ENCODE measurements at regions of chr19 and their contacts with region 1.

Region 1: GRCh38 chr19:50804420-50805272 is 14.4 kb downstream of the ACP4 start:
- DNase-seq: peak; percentile 99
- H3K4me3 ChIP-seq: peak overlapping the region; percentile 99
- H3K27ac ChIP-seq: peak overlapping the region; percentile 73
- H3K4me1 ChIP-seq: peaks cover 22% of the 10 kb centered on the region
- CTCF ChIP-seq: no peak

Region 2: DNA sequence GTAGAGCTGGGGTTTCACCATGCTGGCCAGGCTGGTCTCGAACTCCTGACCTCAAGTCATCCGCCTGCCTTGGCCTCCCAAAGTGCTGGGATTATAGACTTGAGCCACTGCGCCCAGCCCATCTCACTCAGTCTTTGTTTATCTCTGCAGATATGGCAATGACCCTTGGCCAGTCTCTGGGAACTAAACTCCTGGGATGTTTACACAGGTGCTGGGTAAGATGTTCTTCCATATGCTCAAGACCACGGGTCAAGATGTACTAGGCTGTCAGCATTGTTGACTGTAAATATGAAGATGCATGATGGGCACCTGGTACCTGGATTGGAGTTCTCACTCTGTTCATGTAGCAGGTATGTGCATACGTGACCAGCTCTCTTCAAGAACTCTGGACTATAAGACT is 743.0 kb before region 1 on chr19:
- CTCF ChIA-PET with region 1: no interaction called
- POLR2A ChIA-PET with region 1: no interaction called
- intact Hi-C with region 1: no loop called
- DNase-seq: no peak
- H3K4me3 ChIP-seq: no peak overlapping the region
- H3K27ac ChIP-seq: no peak overlapping the region
- H3K4me1 ChIP-seq: no peaks in the 10 kb centered on the region
- CTCF ChIP-seq: no peak

Region 3: GRCh38 chr19:50341091-50341564 is 463.5 kb before region 1 on chr19:
- CTCF ChIA-PET with region 1: no interaction called
- POLR2A ChIA-PET with region 1: no interaction called
- intact Hi-C with region 1: loop called (anchors 10 kb)
- DNase-seq: peak; percentile 76
- H3K4me3 ChIP-seq: peak overlapping the region; percentile 74
- H3K27ac ChIP-seq: peak overlapping the region; percentile 98
- H3K4me1 ChIP-seq: peaks cover 75% of the 10 kb centered on the region
- CTCF ChIP-seq: no peak

Region 4: DNA sequence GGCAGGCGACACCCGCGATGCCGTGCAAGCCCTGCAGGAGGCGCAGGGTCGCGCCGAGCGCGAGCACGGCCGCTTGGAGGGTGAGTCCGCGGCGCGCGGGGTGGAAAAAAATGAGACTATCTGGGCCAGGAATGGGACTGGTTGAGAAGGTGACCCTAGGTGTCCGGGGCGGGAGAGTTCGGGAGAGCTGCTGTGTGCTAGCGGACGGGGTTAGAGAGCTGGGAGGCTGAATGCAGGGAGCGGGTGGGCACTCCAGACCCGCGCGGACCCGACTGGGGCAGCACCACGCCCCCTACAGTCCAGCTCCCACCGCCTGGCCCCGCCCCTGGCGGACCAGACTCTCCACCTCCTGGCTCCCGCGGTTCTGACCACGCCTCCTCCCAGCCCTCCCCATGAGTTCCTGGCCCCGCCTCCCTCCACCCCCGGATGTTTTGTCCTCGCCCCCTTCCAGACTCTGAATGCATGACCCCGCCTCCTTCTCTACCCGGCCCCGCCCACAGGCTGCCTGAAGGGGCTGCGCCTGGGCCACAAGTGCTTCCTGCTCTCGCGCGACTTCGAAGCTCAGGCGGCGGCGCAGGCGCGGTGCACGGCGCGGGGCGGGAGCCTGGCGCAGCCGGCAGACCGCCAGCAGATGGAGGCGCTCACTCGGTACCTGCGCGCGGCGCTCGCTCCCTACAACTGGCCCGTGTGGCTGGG is 80.0 kb before region 1 on chr19:
- CTCF ChIA-PET with region 1: no interaction called
- POLR2A ChIA-PET with region 1: interaction called, 10 read pairs
- intact Hi-C with region 1: no loop called
- DNase-seq: peak; percentile 96
- H3K4me3 ChIP-seq: peak overlapping the region; percentile 76
- H3K27ac ChIP-seq: no peak overlapping the region
- H3K4me1 ChIP-seq: peaks cover 23% of the 10 kb centered on the region
- CTCF ChIP-seq: peak; percentile 76

Region 5: GRCh38 chr19:50817941-50818858 is 13.6 kb after region 1 on chr19:
- CTCF ChIA-PET with region 1: no interaction called
- POLR2A ChIA-PET with region 1: interaction called, 3 read pairs
- intact Hi-C with region 1: loop called (anchors 2 kb)
- DNase-seq: peak; percentile 71
- H3K4me3 ChIP-seq: peak overlapping the region; percentile 71
- H3K27ac ChIP-seq: no peak overlapping the region
- H3K4me1 ChIP-seq: peaks cover 30% of the 10 kb centered on the region
- CTCF ChIP-seq: no peak

Region 6: DNA sequence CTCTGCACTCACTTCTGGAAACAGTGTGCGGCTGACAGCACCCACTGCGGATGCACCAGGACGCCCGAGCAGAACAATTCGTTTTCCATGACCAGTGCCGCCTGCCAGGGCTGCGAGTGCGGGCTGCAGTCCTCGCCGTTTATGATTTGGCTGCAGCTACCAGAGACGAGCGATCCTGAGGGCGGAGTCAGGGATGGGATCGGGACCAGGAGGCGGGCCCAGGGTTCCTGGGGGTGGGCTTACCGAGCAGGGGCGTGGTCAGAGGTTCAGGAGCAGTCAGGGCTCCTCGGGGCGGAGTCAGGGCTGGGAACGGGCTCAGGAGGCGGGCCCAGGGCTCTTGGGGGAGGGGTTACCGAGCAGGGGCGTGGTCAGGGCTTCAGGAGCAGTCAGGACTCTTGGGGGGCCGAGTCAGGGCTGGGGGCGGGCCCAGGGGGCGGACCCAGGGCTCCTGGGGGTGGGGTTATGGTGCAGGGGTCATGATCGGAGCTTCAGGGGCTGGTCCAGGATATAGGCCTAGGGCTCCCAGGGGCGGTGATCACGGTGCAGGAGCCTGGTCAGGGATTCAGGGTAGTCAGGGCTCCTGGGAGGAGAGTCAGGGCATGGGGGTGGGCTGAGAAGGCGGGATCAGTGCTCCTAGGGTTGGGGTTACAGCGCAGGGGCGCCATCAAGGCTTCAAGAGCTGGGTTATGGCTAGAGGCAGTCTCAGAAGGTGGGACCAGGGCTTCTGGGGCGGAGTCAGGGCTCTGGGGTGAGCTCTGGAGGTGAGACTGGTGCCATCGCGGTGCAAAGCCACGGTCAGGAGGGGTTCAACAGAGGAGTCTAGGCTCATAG is 104.8 kb after region 1 on chr19:
- CTCF ChIA-PET with region 1: no interaction called
- POLR2A ChIA-PET with region 1: no interaction called
- intact Hi-C with region 1: no loop called
- DNase-seq: peak; percentile 52
- H3K4me3 ChIP-seq: no peak overlapping the region
- H3K27ac ChIP-seq: no peak overlapping the region
- H3K4me1 ChIP-seq: no peaks in the 10 kb centered on the region
- CTCF ChIP-seq: no peak